Natural killer cell (primary cell): ENCODE measurements at regions of chr20 and their contacts with region 1.

Region 1: DNA sequence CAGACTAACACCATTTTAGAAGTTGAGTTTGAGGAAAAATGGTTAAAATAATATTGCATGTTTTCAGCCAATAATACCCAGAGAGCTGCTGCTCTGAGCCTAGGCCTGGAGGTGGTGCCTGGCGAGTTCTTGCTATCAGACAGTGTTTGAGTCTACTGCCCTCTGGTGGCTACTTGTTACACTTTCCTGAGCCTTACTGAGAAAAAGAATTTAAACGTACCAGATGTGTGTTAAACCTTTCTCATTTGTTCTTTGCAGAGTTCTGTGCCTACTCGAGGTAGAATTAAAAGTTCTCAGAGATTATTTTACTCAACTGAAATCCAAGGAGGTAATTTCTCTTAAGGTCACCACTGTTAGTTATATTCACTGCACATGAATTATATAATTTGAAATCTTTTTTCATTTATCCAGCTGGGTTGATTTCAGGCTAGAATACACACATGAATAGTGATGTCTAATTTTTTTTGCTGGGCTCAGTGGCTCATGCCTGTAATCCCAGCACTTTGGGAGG is 38.2 kb downstream of the SHLD1 start:
- DNase-seq: peak; percentile 39 to 94
- ATAC-seq: peak; percentile 95 to 100 (median 100)
- H3K4me3 ChIP-seq: no peak overlapping the region
- H3K4me3 Mint-ChIP-seq: no peak overlapping the region
- H3K27ac ChIP-seq: no peak overlapping the region
- H3K27ac Mint-ChIP-seq: peak overlapping the region in 1 of 2 donors; percentile 11
- H3K4me1 ChIP-seq: no peaks in the 10 kb centered on the region
- H3K4me1 Mint-ChIP-seq: peaks cover 0 to 5% of the 10 kb centered on the region in 2 donors
- H3K27me3 ChIP-seq: no peaks in the 10 kb centered on the region
- H3K27me3 Mint-ChIP-seq: no peaks in the 10 kb centered on the region
- CTCF ChIP-seq: peak; percentile 88

Region 2: GRCh38 chr20:5529331-5530148 is 258.9 kb before region 1 on chr20:
- intact Hi-C with region 1: loop called (anchors 1 kb)
- DNase-seq: peak; percentile 76 to 89
- ATAC-seq: peak; percentile 88 to 93 (median 89)
- H3K4me3 ChIP-seq: no peak overlapping the region
- H3K4me3 Mint-ChIP-seq: peak overlapping the region; percentile 82
- H3K27ac ChIP-seq: no peak overlapping the region
- H3K27ac Mint-ChIP-seq: peak overlapping the region; percentile 61 to 68
- H3K4me1 ChIP-seq: peaks cover 20% of the 10 kb centered on the region
- H3K4me1 Mint-ChIP-seq: peaks cover 24 to 31% of the 10 kb centered on the region in 2 donors
- H3K27me3 ChIP-seq: no peaks in the 10 kb centered on the region
- H3K27me3 Mint-ChIP-seq: no peaks in the 10 kb centered on the region
- CTCF ChIP-seq: peak; percentile 59

Region 3: GRCh38 chr20:5557123-5557522 is 231.3 kb before region 1 on chr20:
- intact Hi-C with region 1: loop called (anchors 1 kb)
- DNase-seq: peak; percentile 44 to 68
- ATAC-seq: peak; percentile 72 to 88 (median 72)
- H3K4me3 ChIP-seq: no peak overlapping the region
- H3K4me3 Mint-ChIP-seq: no peak overlapping the region
- H3K27ac ChIP-seq: peak overlapping the region; percentile 8
- H3K27ac Mint-ChIP-seq: peak overlapping the region; percentile 5 to 67
- H3K4me1 ChIP-seq: no peaks in the 10 kb centered on the region
- H3K4me1 Mint-ChIP-seq: peaks cover 5 to 13% of the 10 kb centered on the region in 2 donors
- H3K27me3 ChIP-seq: no peaks in the 10 kb centered on the region
- H3K27me3 Mint-ChIP-seq: no peaks in the 10 kb centered on the region
- CTCF ChIP-seq: peak; percentile 60

Region 4: DNA sequence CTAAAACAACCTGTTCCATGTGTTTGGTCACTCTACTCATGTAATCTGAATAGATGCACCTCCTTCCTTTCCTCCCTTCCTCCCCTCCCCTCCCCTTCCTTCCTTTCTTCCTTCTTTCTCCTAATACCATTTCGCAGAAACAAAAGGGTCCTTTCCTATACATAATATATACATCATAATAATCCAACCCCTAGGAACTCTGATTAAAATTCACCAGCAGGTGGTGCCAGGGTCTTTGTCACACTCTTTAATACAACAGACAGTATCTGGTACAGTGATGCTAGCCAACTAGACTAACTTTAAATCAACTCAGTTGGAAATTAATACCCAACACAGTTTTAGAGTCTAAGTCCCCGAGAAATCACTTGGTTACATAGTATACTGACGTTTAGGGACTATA is 219.4 kb before region 1 on chr20:
- intact Hi-C with region 1: loop called (anchors 1 kb)
- DNase-seq: peak in 1 of 2 donors; percentile 76
- ATAC-seq: peak; percentile 81 to 95 (median 82)
- H3K4me3 ChIP-seq: no peak overlapping the region
- H3K4me3 Mint-ChIP-seq: no peak overlapping the region
- H3K27ac ChIP-seq: no peak overlapping the region
- H3K27ac Mint-ChIP-seq: peak overlapping the region; percentile 53 to 65
- H3K4me1 ChIP-seq: no peaks in the 10 kb centered on the region
- H3K4me1 Mint-ChIP-seq: peaks cover 11 to 23% of the 10 kb centered on the region in 2 donors
- H3K27me3 ChIP-seq: no peaks in the 10 kb centered on the region
- H3K27me3 Mint-ChIP-seq: no peaks in the 10 kb centered on the region
- CTCF ChIP-seq: peak; percentile 64

Region 5: GRCh38 chr20:6008254-6008653 is 219.8 kb after region 1 on chr20:
- intact Hi-C with region 1: loop called (anchors 1 kb)
- DNase-seq: no peak
- ATAC-seq: no peak
- H3K4me3 ChIP-seq: no peak overlapping the region
- H3K4me3 Mint-ChIP-seq: peak overlapping the region; percentile 93
- H3K27ac ChIP-seq: no peak overlapping the region
- H3K27ac Mint-ChIP-seq: peak overlapping the region; percentile 75 to 91
- H3K4me1 ChIP-seq: peaks cover 9% of the 10 kb centered on the region
- H3K4me1 Mint-ChIP-seq: peaks cover 19 to 46% of the 10 kb centered on the region in 2 donors
- H3K27me3 ChIP-seq: no peaks in the 10 kb centered on the region
- H3K27me3 Mint-ChIP-seq: no peaks in the 10 kb centered on the region
- CTCF ChIP-seq: no peak

Region 6: GRCh38 chr20:6075428-6076219 is 287.2 kb after region 1 on chr20:
- intact Hi-C with region 1: loop called (anchors 5 kb)
- DNase-seq: no peak
- ATAC-seq: no peak
- H3K4me3 ChIP-seq: no peak overlapping the region
- H3K4me3 Mint-ChIP-seq: no peak overlapping the region
- H3K27ac ChIP-seq: no peak overlapping the region
- H3K27ac Mint-ChIP-seq: no peak overlapping the region
- H3K4me1 ChIP-seq: no peaks in the 10 kb centered on the region
- H3K4me1 Mint-ChIP-seq: peaks cover 5 to 6% of the 10 kb centered on the region in 2 donors
- H3K27me3 ChIP-seq: no peaks in the 10 kb centered on the region
- H3K27me3 Mint-ChIP-seq: peaks cover 0 to 3% of the 10 kb centered on the region in 2 donors
- CTCF ChIP-seq: no peak